ENCODE measurements at regions of chr16 and their contacts with region 1.

Region 1: DNA sequence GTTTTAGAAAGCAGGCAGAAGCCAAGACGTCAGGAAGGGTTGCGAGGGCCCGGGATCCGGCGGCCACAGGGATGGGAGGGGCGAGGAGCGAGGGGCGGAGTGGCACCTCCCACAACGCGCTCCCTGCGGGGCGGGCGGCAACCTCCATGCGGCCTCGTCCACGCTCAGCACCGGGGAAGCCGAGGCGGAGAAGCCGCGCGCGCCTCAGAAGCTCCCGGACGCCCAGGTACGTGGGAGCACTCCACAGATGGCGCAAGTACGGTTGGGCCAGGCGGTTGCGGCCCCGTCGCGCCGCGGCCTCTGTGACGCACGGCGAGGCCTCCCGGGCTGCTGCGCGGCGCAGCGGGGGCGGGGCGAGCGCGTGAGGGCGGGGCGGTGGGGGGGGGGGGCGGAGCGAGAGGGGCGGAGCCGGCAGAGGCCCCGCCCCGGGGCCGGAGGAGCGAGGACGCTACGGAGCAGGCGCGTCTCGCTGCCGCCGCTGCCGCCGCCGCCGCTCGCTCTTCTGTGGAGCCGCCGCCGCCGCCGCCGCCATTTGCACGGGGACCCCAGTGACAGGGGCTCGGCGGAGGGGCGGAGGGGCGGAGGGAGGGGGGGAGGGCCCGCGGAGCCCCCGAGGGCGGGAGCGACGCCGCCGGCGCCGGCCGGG is at the start of gene TENT4B:
- DNase-seq: peak; percentile 85
- H3K4me3 Mint-ChIP-seq: peak within 1 kb of the TSS; percentile 80
- H3K27ac Mint-ChIP-seq: peak within 1 kb of the TSS; percentile 93
- H3K4me1 Mint-ChIP-seq: peaks cover 34% of the 10 kb centered on the region
- H3K27me3 Mint-ChIP-seq: no peaks in the 10 kb centered on the region
- total RNA-seq, gene TENT4B: 17.9 to 18.4 TPM

Region 2: GRCh38 chr16:48609652-48610029 is 1543.3 kb before region 1 on chr16:
- CTCF ChIA-PET with region 1: no interaction called
- intact Hi-C with region 1: loop called (anchors 5 kb)
- DNase-seq: peak; percentile 40
- H3K4me3 Mint-ChIP-seq: peak overlapping the region; percentile 85
- H3K27ac Mint-ChIP-seq: peak overlapping the region; percentile 89
- H3K4me1 Mint-ChIP-seq: peaks cover 37% of the 10 kb centered on the region
- H3K27me3 Mint-ChIP-seq: no peaks in the 10 kb centered on the region

Region 3: DNA sequence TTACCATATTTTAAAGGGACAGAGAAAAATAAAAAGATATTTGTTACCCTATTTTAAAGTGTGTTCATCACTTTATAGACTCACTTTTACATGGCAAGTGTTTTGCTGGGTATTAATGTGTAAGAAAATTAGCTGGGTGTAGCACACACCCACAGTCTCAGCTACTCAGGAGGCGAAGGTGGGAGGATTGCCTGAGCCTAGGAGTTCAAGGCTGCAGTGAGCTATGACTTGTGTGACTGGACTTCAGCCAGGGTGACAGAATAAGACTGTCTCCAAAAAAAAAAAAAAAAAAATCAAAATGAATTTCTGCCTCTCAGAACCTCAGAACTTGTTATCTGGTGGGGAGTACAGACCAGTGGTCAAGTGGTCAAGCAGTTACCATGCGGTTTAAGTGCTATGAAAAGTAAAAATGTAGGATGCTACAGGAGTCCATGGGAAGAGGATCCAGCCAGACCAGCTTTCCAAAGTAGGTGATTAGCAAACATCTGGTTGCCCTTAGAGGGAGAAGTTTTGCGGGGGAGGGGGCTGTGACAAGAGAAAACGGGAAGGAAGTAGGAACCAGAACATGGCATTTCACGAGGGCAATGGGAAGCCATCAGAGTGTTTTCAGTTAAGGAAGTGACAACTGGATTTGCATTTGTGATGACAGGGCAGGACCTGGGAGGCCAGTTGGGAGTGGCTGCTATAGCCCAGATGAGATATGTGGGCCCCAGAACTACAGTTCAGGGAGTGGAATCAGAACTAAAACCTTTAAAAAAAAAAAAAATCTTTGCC is 114.0 kb before region 1 on chr16:
- CTCF ChIA-PET with region 1: no interaction called
- intact Hi-C with region 1: no loop called
- DNase-seq: no peak
- H3K4me3 Mint-ChIP-seq: no peak overlapping the region
- H3K27ac Mint-ChIP-seq: no peak overlapping the region
- H3K4me1 Mint-ChIP-seq: peaks cover 14% of the 10 kb centered on the region
- H3K27me3 Mint-ChIP-seq: peaks cover 5% of the 10 kb centered on the region

Region 4: DNA sequence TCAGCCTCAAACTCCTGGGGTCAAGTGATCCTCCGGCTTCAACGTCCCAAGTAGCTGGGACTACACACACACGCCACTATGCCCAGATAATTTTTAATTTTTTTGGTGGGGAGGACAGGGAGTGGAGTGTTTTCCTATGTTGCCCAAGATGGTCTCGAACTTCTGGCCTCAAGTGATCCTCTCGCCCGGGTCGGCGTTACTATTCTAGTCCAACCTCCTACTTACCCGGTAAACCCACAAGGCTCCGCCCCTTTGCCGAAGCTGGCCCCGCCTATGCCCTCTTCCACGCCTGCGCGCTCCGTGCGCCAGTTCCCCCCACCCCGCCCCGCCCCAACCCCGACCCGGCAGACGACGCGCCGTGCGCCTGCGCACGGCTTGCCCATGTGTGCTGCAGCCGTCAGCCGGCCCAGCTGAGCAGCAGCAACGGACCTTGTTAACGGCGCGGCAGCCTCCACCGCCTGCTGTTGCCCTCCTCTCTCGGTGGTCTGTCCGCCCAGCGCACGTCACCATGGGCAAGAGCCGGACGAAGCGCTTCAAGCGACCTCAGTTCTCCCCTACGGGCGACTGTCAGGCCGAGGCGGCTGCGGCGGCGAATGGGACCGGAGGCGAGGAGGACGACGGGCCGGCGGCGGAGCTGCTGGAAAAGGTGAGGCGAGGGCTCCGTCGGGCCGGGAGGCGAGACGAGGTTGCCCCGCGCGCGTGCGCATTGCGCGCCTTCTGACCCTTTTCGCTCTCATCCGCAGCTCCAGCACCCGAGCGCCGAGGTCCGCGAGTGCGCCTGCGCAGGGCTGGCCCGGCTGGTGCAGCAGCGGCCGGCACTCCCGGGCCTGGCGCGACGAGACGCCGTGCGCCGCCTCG is 87.1 kb before region 1 on chr16 and contains the start of gene HEATR3:
- CTCF ChIA-PET with region 1: interaction called, 18 read pairs
- intact Hi-C with region 1: loop called (anchors 1 kb)
- DNase-seq: peak; percentile 96
- H3K4me3 Mint-ChIP-seq: peak within 1 kb of the TSS; percentile 86
- H3K27ac Mint-ChIP-seq: peak within 1 kb of the TSS; percentile 81
- H3K4me1 Mint-ChIP-seq: peaks cover 27% of the 10 kb centered on the region
- H3K27me3 Mint-ChIP-seq: no peaks in the 10 kb centered on the region
- total RNA-seq, gene HEATR3: 16.3 to 17.5 TPM

Region 5: DNA sequence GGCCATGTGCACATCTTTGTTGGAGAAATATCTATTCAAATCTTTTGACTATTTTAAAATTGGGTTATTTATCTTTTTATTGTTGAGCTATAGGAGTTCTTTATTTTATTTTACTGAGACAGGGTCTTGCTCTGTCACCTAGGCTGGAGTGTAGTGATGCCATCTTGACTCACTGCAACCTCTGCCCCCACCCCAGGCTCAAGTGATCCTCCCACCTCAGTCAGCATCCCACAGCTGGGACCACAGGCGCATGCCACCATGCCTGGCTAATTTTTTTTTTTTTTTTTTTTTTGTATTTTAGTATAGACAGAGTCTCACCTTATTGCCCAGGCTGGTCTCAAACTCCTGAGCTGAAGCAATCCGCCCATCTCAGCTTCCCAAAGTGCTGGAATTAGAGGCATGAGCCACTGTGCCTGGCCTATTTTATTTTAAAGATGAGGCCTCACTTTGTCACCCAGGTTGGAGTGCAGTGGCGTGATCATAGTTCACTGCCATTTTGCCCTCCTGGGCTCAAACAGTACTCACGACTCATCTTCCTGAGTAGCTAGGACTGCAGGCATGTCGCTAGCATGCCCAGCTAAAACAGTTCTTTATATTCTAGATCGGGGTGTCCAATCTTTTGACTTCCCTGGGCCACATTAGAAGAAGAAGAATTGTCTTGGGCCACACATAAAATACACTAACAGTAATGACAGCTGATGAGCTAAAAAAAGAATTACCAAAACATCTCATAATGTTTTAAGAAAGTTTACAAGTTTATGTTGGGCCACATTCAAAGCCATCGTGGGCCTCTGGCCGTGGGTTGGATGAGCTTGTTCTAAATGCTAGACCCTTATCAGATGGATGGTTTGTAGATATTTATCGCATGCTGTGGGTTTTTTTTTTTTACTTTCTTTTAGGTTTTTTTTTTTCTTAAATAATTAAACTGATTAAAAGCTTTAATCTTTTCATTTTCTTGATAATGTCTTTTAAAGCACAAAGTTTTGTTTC is 13.9 kb after region 1 on chr16:
- CTCF ChIA-PET with region 1: interaction called, 3 read pairs
- intact Hi-C with region 1: loop called (anchors 1 kb)
- DNase-seq: peak; percentile 50
- H3K4me3 Mint-ChIP-seq: peak overlapping the region; percentile 23
- H3K27ac Mint-ChIP-seq: peak overlapping the region; percentile 71
- H3K4me1 Mint-ChIP-seq: peaks cover 66% of the 10 kb centered on the region
- H3K27me3 Mint-ChIP-seq: no peaks in the 10 kb centered on the region

Region 6: DNA sequence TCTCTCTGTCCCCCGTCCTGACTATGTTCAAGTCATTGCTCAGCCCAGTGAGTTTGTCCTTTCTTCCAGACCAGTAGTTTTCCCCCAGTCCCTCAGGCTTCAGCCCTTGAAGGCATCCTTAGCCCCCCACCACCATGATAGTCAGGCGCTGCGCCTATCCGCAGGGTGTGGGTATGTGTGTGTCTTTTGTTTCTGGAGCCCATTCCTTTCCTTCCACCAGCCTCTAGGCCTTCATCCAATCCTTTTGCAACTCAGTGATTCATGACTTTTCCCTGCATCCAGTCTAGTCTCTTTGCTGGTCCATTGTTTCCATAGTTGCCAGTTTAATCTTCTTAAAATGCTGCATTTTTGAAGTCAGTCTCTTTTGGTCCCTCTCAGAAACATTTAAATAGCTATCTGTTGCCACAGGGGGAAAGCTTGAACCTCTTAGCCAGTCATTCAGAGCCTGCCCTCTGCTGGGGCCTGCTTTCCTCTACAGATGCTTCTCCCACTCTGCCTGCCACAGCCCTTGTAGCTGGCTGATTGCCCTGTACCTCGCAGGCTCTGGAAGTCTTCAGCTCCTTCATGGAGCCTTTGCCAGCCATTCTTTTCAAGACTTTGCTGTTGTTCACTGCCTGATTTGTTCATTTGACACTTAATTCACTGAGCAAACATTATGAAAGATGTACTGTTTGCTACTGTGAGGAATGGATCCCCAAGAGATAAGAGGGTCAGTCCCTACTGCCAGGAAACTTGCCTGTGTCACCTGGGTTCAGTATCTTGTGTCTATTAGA is 57.5 kb after region 1 on chr16:
- CTCF ChIA-PET with region 1: interaction called, 9 read pairs
- intact Hi-C with region 1: loop called (anchors 1 kb)
- DNase-seq: peak; percentile 88
- H3K4me3 Mint-ChIP-seq: no peak overlapping the region
- H3K27ac Mint-ChIP-seq: peak overlapping the region; percentile 59
- H3K4me1 Mint-ChIP-seq: peaks cover 32% of the 10 kb centered on the region
- H3K27me3 Mint-ChIP-seq: no peaks in the 10 kb centered on the region

Region 7: GRCh38 chr16:50741808-50742575 is 589.1 kb after region 1 on chr16 and contains the start of gene CYLD:
- CTCF ChIA-PET with region 1: interaction called, 4 read pairs
- intact Hi-C with region 1: loop called (anchors 2 kb)
- DNase-seq: peak; percentile 100
- H3K4me3 Mint-ChIP-seq: peak within 1 kb of the TSS; percentile 90
- H3K27ac Mint-ChIP-seq: peak within 1 kb of the TSS; percentile 96
- H3K4me1 Mint-ChIP-seq: peaks cover 42% of the 10 kb centered on the region
- H3K27me3 Mint-ChIP-seq: no peaks in the 10 kb centered on the region
- total RNA-seq, gene CYLD: 70.8 to 71.9 TPM